CD8-positive, alpha-beta T cell (primary cell): ENCODE measurements at regions of chr6 and their contacts with region 1.

Region 1: DNA sequence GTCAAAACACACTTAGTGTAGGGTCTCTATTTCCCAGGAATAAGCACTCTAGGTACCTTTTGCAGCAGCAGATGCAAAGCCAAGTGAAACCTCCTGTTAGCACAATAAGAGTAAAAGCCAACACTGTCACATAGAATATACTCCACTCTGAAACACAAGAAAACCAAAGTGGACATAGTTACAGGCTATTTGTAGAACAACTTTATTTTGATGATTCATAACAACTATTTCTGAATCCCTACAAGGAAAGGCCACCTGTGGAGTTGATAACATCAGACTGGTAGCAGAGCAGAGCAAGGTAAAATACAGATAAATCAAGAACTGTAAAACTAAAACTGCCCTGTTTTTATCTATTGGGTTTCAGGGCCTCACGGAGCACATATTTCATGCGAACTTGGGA is 59.7 kb downstream of the ALDH5A1 start:
- DNase-seq: no peak
- ATAC-seq: no peak
- H3K4me3 ChIP-seq: no peak overlapping the region
- H3K4me3 Mint-ChIP-seq: no peak overlapping the region
- H3K27ac ChIP-seq: no peak overlapping the region
- H3K27ac Mint-ChIP-seq: no peak overlapping the region
- H3K4me1 ChIP-seq: no peaks in the 10 kb centered on the region
- H3K4me1 Mint-ChIP-seq: no peaks in the 10 kb centered on the region
- H3K27me3 ChIP-seq: no peaks in the 10 kb centered on the region
- H3K27me3 Mint-ChIP-seq: no peaks in the 10 kb centered on the region
- CTCF ChIP-seq: no peak

Region 2: DNA sequence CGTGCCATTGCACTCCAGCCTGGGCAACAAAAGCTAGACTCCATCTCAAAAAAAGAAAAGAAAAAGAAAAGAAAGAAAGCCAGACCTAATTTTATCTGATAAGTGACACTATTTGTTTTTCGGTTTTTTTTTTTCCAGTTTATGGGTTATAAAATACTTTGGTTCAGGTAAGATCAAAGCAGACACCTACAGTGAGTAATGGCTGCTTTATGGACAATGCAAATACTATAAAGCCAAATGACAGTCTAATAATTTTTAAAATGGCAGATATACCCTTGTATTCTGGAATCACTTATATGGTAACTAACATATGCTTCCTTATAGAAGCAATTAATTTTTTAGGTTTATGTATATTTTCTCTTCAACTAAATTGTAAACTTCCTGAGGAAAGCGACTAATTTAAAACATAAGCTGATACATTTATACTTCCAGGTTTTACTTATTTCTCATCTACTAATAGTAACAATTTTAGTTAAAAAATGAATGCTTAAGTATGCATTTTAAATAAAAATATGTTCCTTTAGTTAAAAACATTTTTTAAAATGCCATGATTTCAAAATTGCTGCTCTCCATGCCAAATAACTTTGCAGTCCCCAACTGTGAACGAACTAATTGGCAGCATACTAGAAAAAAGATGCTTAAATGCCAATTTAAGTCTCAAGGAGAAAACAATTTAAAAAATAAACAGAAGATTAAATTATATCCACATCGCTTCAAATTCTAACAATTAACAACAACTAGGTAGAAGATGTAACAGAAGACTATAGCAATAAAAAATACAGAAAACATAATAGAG is 53.0 kb after region 1 on chr6:
- CTCF ChIA-PET with region 1: no interaction called
- POLR2A ChIA-PET with region 1: no interaction called
- intact Hi-C with region 1: loop called in 1 of 2 experiments (anchors 2 kb)
- DNase-seq: no peak
- ATAC-seq: no peak
- H3K4me3 ChIP-seq: no peak overlapping the region
- H3K4me3 Mint-ChIP-seq: no peak overlapping the region
- H3K27ac ChIP-seq: no peak overlapping the region
- H3K27ac Mint-ChIP-seq: no peak overlapping the region
- H3K4me1 ChIP-seq: no peaks in the 10 kb centered on the region
- H3K4me1 Mint-ChIP-seq: no peaks in the 10 kb centered on the region
- H3K27me3 ChIP-seq: no peaks in the 10 kb centered on the region
- H3K27me3 Mint-ChIP-seq: no peaks in the 10 kb centered on the region
- CTCF ChIP-seq: no peak